Calu3 (cell line): ENCODE measurements at regions of chr3 and their contacts with region 1.

Region 1: GRCh38 chr3:146503461-146504202 is 34.3 kb upstream of the PLSCR2 start:
- DNase-seq: peak; percentile 88
- H3K4me3 Mint-ChIP-seq: peak overlapping the region; percentile 69
- H3K27ac Mint-ChIP-seq: peak overlapping the region; percentile 100
- H3K4me1 Mint-ChIP-seq: peaks cover 58% of the 10 kb centered on the region
- H3K27me3 Mint-ChIP-seq: no peaks in the 10 kb centered on the region
- CTCF ChIP-seq: peak; percentile 21

Region 2: GRCh38 chr3:146200461-146201220 is 303.0 kb before region 1 on chr3:
- CTCF ChIA-PET with region 1: no interaction called
- intact Hi-C with region 1: no loop called
- DNase-seq: no peak
- H3K4me3 Mint-ChIP-seq: no peak overlapping the region
- H3K27ac Mint-ChIP-seq: no peak overlapping the region
- H3K4me1 Mint-ChIP-seq: no peaks in the 10 kb centered on the region
- H3K27me3 Mint-ChIP-seq: no peaks in the 10 kb centered on the region
- CTCF ChIP-seq: no peak

Region 3: DNA sequence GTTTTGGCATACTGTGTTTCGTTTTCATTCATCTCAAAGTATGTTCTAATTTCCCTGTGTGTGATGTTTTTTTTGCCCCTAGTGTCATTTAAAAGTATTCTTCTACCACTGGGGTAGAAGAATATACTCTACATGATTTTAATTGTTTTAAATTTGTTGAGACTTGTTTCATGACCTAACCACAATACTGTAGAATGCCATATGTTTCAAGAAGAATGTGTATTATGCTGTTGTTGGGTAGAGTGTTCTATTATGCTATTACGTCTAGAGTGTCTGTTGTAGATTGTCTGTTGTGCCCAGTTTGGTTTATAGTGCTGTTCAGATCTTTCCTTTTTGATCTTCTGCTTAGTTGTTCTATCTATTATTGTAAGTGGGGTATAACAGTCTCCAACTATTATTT is 289.1 kb before region 1 on chr3:
- CTCF ChIA-PET with region 1: no interaction called
- intact Hi-C with region 1: no loop called
- DNase-seq: no peak
- H3K4me3 Mint-ChIP-seq: no peak overlapping the region
- H3K27ac Mint-ChIP-seq: no peak overlapping the region
- H3K4me1 Mint-ChIP-seq: peaks cover 13% of the 10 kb centered on the region
- H3K27me3 Mint-ChIP-seq: no peaks in the 10 kb centered on the region
- CTCF ChIP-seq: no peak

Region 4: GRCh38 chr3:146250449-146251382 is 252.9 kb before region 1 on chr3 and contains the start of gene PLSCR4:
- CTCF ChIA-PET with region 1: no interaction called
- intact Hi-C with region 1: no loop called
- DNase-seq: peak; percentile 77
- H3K4me3 Mint-ChIP-seq: peak within 1 kb of the TSS; percentile 91
- H3K27ac Mint-ChIP-seq: peak within 1 kb of the TSS; percentile 73
- H3K4me1 Mint-ChIP-seq: no peaks in the 10 kb centered on the region
- H3K27me3 Mint-ChIP-seq: no peaks in the 10 kb centered on the region
- CTCF ChIP-seq: no peak
- total RNA-seq, gene PLSCR4: 6.3 and 10.2 TPM in 2 replicates

Region 5: GRCh38 chr3:146334151-146334550 is 169.5 kb before region 1 on chr3:
- CTCF ChIA-PET with region 1: no interaction called
- intact Hi-C with region 1: loop called (anchors 1 kb)
- DNase-seq: peak; percentile 77
- H3K4me3 Mint-ChIP-seq: no peak overlapping the region
- H3K27ac Mint-ChIP-seq: no peak overlapping the region
- H3K4me1 Mint-ChIP-seq: peaks cover 24% of the 10 kb centered on the region
- H3K27me3 Mint-ChIP-seq: no peaks in the 10 kb centered on the region
- CTCF ChIP-seq: peak; percentile 49

Region 6: DNA sequence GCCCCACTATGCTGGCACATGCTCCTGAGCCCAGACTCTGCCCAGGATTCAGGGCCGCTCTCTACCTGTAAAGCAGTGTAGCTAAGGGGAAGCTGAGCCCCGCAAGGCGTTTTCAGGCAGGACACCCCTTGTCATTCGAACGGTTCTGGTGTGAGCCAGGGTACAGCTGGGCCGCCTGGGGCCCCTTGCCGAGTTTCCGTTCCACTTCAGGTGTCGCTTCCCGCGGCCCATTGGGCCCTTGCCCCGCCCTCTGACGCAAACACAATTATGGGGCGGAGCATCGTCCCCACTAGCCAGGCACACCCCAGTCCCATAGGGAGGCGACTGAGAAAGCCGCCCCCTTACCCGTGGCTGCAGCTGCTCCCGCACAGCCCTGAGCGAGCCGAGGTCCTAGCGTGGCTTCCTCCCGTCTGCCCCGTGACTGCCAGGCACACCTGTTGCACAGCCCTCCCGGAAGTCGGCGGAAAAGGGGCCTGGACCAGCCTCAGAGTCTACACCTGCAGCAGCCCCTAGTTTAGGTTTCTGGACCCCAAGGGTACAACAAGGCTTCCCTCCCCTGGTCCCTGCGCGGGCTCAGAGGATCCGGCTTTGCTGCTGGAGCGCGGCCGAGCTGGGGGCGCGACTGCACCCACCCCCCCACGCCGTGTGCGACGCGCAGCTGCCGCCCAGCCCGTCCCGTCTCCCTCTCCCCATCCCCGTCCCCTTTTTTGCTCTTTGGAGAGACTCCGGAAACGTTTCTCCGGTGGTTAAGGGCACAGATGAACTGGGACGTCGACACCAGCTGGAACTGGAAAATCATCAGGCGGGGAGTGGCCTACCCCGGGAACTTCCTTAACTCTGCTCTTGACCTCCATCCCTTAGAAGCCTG is 34.2 kb before region 1 on chr3 and contains the start of gene PLSCR2:
- CTCF ChIA-PET with region 1: interaction called, 3 read pairs
- intact Hi-C with region 1: loop called (anchors 2 kb)
- DNase-seq: peak; percentile 92
- H3K4me3 Mint-ChIP-seq: peak within 1 kb of the TSS; percentile 79
- H3K27ac Mint-ChIP-seq: peak within 1 kb of the TSS; percentile 68
- H3K4me1 Mint-ChIP-seq: peaks cover 51% of the 10 kb centered on the region
- H3K27me3 Mint-ChIP-seq: no peaks in the 10 kb centered on the region
- CTCF ChIP-seq: no peak
- total RNA-seq, gene PLSCR2: 2.9 and 5.1 TPM in 2 replicates